T-cell (primary cell): ENCODE measurements at regions of chr2 and their contacts with region 1.

Region 1: GRCh38 chr2:171297951-171298350 is 135.8 kb downstream of the METTL8 start:
- DNase-seq: no peak
- ATAC-seq: no peak
- H3K4me3 ChIP-seq: no peak overlapping the region
- H3K4me3 Mint-ChIP-seq: no peak overlapping the region
- H3K27ac ChIP-seq: no peak overlapping the region
- H3K27ac Mint-ChIP-seq: no peak overlapping the region
- H3K4me1 ChIP-seq: no peaks in the 10 kb centered on the region
- H3K4me1 Mint-ChIP-seq: no peaks in the 10 kb centered on the region
- H3K27me3 ChIP-seq: no peaks in the 10 kb centered on the region
- H3K27me3 Mint-ChIP-seq: no peaks in the 10 kb centered on the region

Region 2: GRCh38 chr2:171225302-171225980 is 72.5 kb before region 1 on chr2:
- CTCF ChIA-PET with region 1: no interaction called
- POLR2A ChIA-PET with region 1: interaction called in 1 of 2 experiments, 12 read pairs
- DNase-seq: no peak
- ATAC-seq: no peak
- H3K4me3 ChIP-seq: no peak overlapping the region
- H3K4me3 Mint-ChIP-seq: no peak overlapping the region
- H3K27ac ChIP-seq: no peak overlapping the region
- H3K27ac Mint-ChIP-seq: no peak overlapping the region
- H3K4me1 ChIP-seq: no peaks in the 10 kb centered on the region
- H3K4me1 Mint-ChIP-seq: no peaks in the 10 kb centered on the region
- H3K27me3 ChIP-seq: no peaks in the 10 kb centered on the region
- H3K27me3 Mint-ChIP-seq: peaks cover 0 to 5% of the 10 kb centered on the region in 2 donors

Region 3: GRCh38 chr2:171271971-171272436 is 25.9 kb before region 1 on chr2:
- CTCF ChIA-PET with region 1: no interaction called
- POLR2A ChIA-PET with region 1: interaction called in 1 of 2 experiments, 12 read pairs
- DNase-seq: no peak
- ATAC-seq: no peak
- H3K4me3 ChIP-seq: no peak overlapping the region
- H3K4me3 Mint-ChIP-seq: no peak overlapping the region
- H3K27ac ChIP-seq: no peak overlapping the region
- H3K27ac Mint-ChIP-seq: no peak overlapping the region
- H3K4me1 ChIP-seq: no peaks in the 10 kb centered on the region
- H3K4me1 Mint-ChIP-seq: no peaks in the 10 kb centered on the region
- H3K27me3 ChIP-seq: no peaks in the 10 kb centered on the region
- H3K27me3 Mint-ChIP-seq: no peaks in the 10 kb centered on the region